HepG2 (cell line): ENCODE measurements at regions of chr10 and their contacts with region 1.

Region 1: DNA sequence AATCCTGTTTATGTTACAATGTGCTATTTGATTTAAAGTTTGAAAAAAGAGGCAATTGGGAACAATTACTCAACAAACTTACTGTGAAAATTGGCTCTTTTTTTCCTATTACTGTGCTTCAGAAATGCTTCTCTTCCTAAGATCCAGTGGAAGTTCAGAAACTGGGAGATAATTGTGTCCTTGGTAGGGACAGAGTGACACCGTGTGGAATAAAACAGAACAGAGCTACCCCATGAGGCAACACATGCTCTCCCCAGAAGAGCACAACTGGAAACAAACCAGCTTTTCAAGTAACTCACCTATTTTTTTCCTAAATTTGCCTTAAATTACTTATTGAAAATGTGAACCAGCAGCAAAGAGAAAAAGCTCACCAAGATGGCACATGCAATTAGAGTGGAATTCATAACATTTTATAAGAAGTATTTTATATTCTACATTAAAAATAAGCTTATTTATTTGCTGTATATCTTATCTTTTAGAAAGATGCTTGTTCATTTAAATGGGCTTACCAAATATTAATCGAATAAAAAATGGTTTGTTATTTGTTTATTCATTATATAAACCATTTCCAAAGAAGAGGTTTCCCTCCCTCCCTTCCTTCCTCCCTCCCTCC is 346.1 kb upstream of the ANKRD30A start:
- DNase-seq: peak; percentile 30
- ATAC-seq: peak; percentile 90
- H3K4me3 ChIP-seq: no peak overlapping the region
- H3K27ac ChIP-seq: no peak overlapping the region
- H3K4me1 ChIP-seq: no peaks in the 10 kb centered on the region
- H3K27me3 ChIP-seq: no peaks in the 10 kb centered on the region; a peak in 1 of 5 replicates
- CTCF ChIP-seq: peak; percentile 71
- EP300 ChIP-seq: no peak
- POLR2A ChIP-seq: no peak
- RAD21 ChIP-seq: peak; percentile 45; the same call in 1 of the 2 replicates

Region 2: GRCh38 chr10:35781643-35782035 is 997.7 kb before region 1 on chr10:
- CTCF ChIA-PET with region 1: no interaction called
- POLR2A ChIA-PET with region 1: no interaction called
- in situ Hi-C with region 1: no loop called
- intact Hi-C with region 1: loop called (anchors 1 kb)
- DNase-seq: peak; percentile 30
- ATAC-seq: peak; percentile 50; the same call in 2 of the 3 replicates
- H3K4me3 ChIP-seq: no peak overlapping the region
- H3K27ac ChIP-seq: no peak overlapping the region
- H3K4me1 ChIP-seq: no peaks in the 10 kb centered on the region
- H3K27me3 ChIP-seq: no peaks in the 10 kb centered on the region; a peak in 1 of 5 replicates
- CTCF ChIP-seq: peak; percentile 51
- EP300 ChIP-seq: no peak
- POLR2A ChIP-seq: no peak
- RAD21 ChIP-seq: no peak